ENCODE measurements at regions of chr12 and their contacts with region 1.

Region 1: GRCh38 chr12:122107261-122107660 is 28.7 kb downstream of the MLXIP start:
- DNase-seq: no peak
- ATAC-seq: no peak
- H3K4me3 Mint-ChIP-seq: no peak overlapping the region
- H3K27ac Mint-ChIP-seq: peak overlapping the region; percentile 63
- H3K4me1 Mint-ChIP-seq: peaks cover 82% of the 10 kb centered on the region
- H3K27me3 Mint-ChIP-seq: no peaks in the 10 kb centered on the region

Region 2: DNA sequence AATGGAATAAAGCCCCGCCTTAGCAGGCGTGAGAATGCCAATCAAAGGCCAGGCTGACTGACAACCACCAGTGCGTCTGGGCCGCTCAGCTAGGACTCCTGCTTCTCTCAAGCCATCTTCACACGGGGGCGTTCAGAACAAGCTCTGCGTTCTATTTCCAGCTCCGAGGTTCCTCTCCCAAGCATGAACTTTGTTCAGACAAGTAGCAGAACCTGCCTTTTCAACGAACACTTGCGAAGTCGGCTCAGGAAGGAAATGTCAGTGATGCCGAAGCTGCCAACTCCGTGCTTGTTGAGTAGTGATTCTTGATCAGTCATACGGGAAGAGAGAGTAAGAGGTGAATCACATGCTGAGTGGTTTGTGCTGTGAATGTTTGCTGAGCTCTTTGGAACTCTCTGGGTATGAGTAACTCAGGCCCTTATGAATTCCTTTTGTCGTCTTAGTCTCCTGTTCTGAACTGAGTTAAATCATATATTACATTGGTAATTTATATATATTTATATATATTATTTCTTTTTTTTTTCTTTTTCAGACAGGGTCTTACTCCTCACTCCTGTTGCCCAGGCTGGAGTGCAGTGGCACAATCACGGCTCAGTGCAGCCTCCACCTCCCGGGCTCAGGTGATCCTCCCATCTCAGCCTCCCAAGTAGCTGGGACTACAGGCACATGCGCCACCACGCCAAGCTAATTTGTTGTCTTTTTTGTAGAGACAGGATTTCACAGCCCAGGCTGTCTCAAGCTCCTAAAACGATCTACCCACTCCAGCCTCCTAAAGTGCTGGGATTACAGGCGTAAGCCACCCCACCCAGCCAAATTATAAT is 115.0 kb before region 1 on chr12:
- CTCF ChIA-PET with region 1: interaction called, 3 read pairs
- POLR2A ChIA-PET with region 1: interaction called, 4 read pairs
- intact Hi-C with region 1: loop called in 1 of 2 experiments (anchors 2 kb)
- DNase-seq: peak; percentile 84
- ATAC-seq: peak; percentile 100
- H3K4me3 Mint-ChIP-seq: peak overlapping the region; percentile 30
- H3K27ac Mint-ChIP-seq: peak overlapping the region; percentile 83
- H3K4me1 Mint-ChIP-seq: peaks cover 23% of the 10 kb centered on the region
- H3K27me3 Mint-ChIP-seq: peaks cover 5% of the 10 kb centered on the region

Region 3: GRCh38 chr12:122123051-122123760 is 15.9 kb after region 1 on chr12:
- CTCF ChIA-PET with region 1: interaction called, 14 read pairs
- POLR2A ChIA-PET with region 1: no interaction called
- intact Hi-C with region 1: no loop called
- DNase-seq: peak; percentile 84
- ATAC-seq: peak; percentile 81
- H3K4me3 Mint-ChIP-seq: no peak overlapping the region
- H3K27ac Mint-ChIP-seq: peak overlapping the region; percentile 85
- H3K4me1 Mint-ChIP-seq: peaks cover 34% of the 10 kb centered on the region
- H3K27me3 Mint-ChIP-seq: no peaks in the 10 kb centered on the region

Region 4: DNA sequence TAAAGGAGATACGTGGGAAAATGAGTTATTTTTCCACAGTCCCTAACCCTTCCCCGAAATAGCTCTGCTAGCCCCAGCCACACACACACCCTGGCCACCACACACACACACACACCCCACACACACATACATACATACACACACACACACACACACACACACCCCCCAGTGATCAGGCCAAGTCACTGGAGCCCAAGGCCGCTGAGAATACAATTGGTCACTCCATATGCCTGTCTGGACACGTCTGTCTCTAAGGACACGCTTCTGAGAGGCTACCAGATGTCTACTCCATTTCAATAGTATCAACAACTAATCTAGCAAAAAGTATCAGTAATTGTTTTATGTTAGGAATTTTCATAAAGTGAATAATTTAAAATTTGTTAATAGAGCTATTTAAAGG is 131.6 kb after region 1 on chr12:
- CTCF ChIA-PET with region 1: no interaction called
- POLR2A ChIA-PET with region 1: no interaction called
- intact Hi-C with region 1: no loop called
- DNase-seq: no peak
- ATAC-seq: no peak
- H3K4me3 Mint-ChIP-seq: no peak overlapping the region
- H3K27ac Mint-ChIP-seq: no peak overlapping the region
- H3K4me1 Mint-ChIP-seq: peaks cover 7% of the 10 kb centered on the region
- H3K27me3 Mint-ChIP-seq: no peaks in the 10 kb centered on the region